ENCODE measurements at regions of chr9 and their contacts with region 1.

Region 1: DNA sequence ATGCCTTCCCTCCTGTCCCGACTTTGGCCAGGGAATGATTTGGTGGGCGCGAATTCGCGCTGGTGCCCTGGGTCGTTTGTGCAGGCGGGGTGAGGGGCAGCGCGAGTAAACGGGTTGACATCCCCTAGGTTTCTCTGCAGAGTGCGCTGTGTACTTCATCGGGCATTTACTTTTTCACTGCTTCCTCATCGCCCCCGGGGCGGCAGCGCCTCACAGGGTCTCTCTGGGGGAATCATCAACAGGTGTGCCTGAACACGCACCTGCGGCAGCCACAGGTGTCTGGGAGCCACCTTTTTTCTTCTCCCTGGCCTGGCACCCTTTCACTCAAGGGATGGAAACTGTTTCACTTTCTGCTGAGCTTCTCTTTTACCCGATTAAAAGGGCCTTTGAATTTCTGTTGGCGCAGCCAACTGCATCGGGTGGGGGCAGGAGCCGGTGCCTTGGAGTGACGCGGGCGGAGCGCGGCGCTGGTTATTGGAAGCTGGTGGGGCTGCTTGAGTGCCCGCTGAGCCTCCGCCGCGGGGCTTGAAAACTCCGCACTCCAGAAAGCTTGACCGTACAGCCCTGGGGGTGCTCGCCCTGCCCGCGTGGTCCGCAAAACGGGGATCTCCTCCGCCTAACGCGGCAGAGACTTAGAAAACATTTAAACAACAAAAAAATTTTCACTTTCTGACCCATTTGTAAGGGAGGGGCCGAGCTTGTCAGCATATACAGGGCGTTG is 52.1 kb upstream of the TJP2 start:
- DNase-seq: no peak
- H3K4me3 ChIP-seq: peak overlapping the region; percentile 81 to 93 (median 86)
- H3K27ac ChIP-seq: peak overlapping the region; percentile 78 to 90 (median 84)
- H3K4me1 ChIP-seq: peaks cover 9 to 19% (median 17%) of the 10 kb centered on the region in 4 donors
- H3K27me3 ChIP-seq: no peaks in the 10 kb centered on the region
- CTCF ChIP-seq: no peak
- EP300 ChIP-seq: no peak
- POLR2A ChIP-seq: no peak

Region 2: GRCh38 chr9:69056191-69056815 is 65.7 kb before region 1 on chr9:
- intact Hi-C with region 1: loop called (anchors 10 kb)
- DNase-seq: no peak
- H3K4me3 ChIP-seq: no peak overlapping the region
- H3K27ac ChIP-seq: no peak overlapping the region
- H3K4me1 ChIP-seq: peaks cover 0 to 21% (median 16%) of the 10 kb centered on the region in 4 donors
- H3K27me3 ChIP-seq: no peaks in the 10 kb centered on the region
- CTCF ChIP-seq: no peak
- EP300 ChIP-seq: no peak
- POLR2A ChIP-seq: no peak

Region 3: DNA sequence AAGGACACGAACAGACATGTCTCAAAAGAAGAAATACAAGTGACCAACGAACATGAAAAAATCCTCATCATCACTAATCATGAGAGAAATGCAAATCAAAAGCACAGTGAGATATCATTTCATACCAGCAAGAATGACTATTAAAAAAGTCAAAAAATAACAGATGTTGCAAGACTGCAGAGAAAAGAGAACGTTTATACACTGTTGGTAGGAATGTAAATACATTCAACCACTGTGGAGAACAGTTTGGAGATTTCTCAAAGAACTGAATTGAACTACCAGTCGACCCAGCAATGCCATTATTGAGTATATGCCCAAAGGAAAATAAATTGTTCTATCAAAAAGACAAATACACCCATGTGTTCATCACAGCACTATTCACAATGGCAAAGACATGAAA is 40.7 kb before region 1 on chr9:
- intact Hi-C with region 1: loop called (anchors 5 kb)
- DNase-seq: no peak
- H3K4me3 ChIP-seq: no peak overlapping the region
- H3K27ac ChIP-seq: peak overlapping the region in 1 of 4 donors; percentile 3
- H3K4me1 ChIP-seq: peaks cover 30 to 40% (median 34%) of the 10 kb centered on the region in 4 donors
- H3K27me3 ChIP-seq: no peaks in the 10 kb centered on the region
- CTCF ChIP-seq: no peak
- EP300 ChIP-seq: no peak
- POLR2A ChIP-seq: no peak

Region 4: DNA sequence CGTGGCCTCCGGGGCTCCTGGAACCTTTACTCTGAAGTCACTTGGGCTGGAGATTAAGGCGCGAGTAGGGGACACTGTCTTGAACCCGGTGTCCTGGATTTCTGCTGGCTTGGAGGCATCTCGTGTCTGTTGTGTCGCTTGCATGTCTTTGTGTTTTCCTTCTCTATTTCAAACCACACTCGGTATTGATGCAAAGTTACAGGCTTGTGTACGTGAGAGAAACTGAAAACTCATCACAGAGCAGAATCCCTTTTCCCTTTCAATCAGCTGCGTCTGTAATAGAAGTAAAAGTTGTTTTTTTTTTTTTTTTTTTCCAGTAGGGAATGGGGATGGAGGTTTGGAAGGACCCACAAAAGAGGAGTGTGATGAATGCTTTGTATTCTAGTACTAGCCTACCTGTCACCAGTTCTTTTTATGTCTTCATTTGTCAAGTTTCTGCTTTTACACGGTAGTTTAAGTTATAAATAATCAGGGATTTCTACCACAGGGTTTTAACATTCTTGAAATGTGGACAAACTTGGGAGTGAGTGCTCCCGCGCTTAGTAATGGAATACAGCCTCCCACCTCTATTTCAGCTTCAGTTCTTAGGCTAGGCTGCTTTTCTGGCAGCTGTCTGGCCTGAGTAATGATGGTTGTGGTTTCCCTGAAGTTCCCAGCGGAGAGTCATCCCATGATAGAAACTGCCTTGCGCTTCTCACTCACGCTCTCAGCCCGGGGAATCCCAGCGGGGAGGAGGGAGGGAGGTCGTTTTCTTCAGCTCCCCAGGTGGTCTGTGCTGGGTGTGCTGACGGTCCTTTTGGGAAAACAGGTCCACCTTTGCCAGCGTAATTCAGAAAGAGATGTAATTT is 52.9 kb after region 1 on chr9:
- intact Hi-C with region 1: loop called (anchors 5 kb)
- DNase-seq: no peak
- H3K4me3 ChIP-seq: peak overlapping the region; percentile 72 to 86 (median 82)
- H3K27ac ChIP-seq: peak overlapping the region; percentile 85 to 91 (median 89)
- H3K4me1 ChIP-seq: peaks cover 30 to 68% (median 61%) of the 10 kb centered on the region in 4 donors
- H3K27me3 ChIP-seq: no peaks in the 10 kb centered on the region
- CTCF ChIP-seq: no peak
- EP300 ChIP-seq: peak; percentile 25
- POLR2A ChIP-seq: no peak

Region 5: DNA sequence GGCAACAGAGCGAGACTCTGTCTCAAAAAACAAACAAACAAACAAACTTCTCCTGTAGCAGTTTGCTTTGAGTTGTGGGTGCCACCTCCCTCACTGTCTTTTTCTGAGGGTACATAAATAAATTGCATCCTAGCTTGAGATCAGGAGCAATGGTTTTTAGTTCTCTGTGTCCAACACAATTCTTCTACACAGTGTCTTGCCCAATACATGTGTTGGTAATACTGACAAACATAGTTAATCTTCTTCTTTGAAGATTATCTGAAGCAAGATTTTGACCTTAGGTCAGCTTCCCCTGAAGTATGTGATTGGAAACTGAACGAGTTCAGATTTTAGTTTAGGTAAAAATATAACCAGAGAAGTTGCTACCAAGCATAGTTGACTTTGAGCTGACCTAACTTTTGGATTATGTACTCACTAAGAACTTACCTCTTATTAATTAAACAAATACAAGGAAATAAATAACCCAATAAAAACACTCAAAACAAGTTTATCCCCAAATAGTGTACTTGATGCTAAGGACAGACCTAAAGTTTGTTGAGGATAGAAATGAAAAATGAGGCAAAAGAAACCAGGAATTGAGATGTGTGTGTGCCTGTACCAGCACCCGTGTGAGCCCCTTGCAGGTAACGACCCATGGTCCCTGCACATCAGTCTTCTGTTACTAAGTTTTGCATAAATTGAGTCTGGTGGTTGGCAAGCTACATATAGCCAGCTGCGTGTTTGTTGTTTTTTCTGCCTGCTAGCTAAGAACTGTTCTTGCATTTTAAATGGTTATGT is 68.3 kb after region 1 on chr9:
- intact Hi-C with region 1: loop called (anchors 5 kb)
- DNase-seq: no peak
- H3K4me3 ChIP-seq: no peak overlapping the region
- H3K27ac ChIP-seq: peak overlapping the region in 2 of 4 donors; percentile 4 to 42
- H3K4me1 ChIP-seq: peaks cover 69 to 88% (median 83%) of the 10 kb centered on the region in 4 donors
- H3K27me3 ChIP-seq: no peaks in the 10 kb centered on the region
- CTCF ChIP-seq: no peak
- EP300 ChIP-seq: no peak
- POLR2A ChIP-seq: no peak